Sigmoid colon (tissue), 7 donors: ENCODE measurements at regions of chr3 and their contacts with region 1.

Region 1: GRCh38 chr3:6799264-6799915 is 61.5 kb upstream of the GRM7 start:
- DNase-seq: no peak
- H3K4me3 ChIP-seq: no peak overlapping the region
- H3K27ac ChIP-seq: no peak overlapping the region
- H3K4me1 ChIP-seq: no peaks in the 10 kb centered on the region
- H3K27me3 ChIP-seq: no peaks in the 10 kb centered on the region
- CTCF ChIP-seq: peak in 3 of 4 experiments; percentile 28 to 38 (median 32)
- EP300 ChIP-seq: no peak
- POLR2A ChIP-seq: no peak

Region 2: DNA sequence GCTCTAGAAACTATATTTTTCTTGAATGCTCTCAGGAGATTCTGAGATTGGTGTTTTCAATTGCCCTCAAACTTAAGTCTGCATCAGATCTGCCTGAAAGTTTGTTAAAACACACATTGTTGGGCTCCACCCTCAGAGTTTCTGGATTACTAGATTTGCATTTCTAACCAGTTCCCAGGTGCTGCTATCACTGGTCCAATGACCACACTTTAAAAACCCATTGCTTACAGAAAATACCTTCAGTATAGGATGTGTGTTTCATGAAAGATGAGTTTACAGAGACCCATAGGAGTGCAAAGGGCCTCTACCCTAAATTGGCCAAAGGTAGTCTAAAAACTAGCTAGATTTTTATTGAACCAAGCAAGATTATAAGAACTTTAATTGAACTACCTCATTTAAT is 79.3 kb after region 1 on chr3:
- intact Hi-C with region 1: no loop called
- DNase-seq: no peak
- H3K4me3 ChIP-seq: no peak overlapping the region
- H3K27ac ChIP-seq: no peak overlapping the region
- H3K4me1 ChIP-seq: no peaks in the 10 kb centered on the region
- H3K27me3 ChIP-seq: no peaks in the 10 kb centered on the region
- CTCF ChIP-seq: no peak
- EP300 ChIP-seq: no peak
- POLR2A ChIP-seq: no peak

Region 3: DNA sequence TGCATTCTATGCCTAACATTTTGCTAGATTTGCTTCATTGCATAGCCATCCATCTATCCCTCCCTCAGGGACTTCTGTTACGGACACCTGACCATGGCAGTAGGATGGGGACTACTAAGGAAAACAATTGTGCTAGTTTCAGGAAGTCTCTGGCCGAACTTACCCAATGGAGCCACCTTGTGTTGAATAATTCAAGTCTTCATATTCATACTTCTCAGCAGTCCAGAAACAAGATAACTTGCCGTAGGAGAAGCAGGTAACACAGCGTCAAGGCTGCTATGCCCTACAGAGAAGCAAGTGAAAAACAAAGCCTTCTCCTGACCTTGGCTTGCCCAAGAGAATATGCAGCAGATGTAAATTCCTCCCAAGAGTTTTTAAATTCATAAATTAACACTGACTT is 746.9 kb after region 1 on chr3:
- intact Hi-C with region 1: loop called (anchors 10 kb)
- DNase-seq: no peak
- H3K4me3 ChIP-seq: no peak overlapping the region
- H3K27ac ChIP-seq: no peak overlapping the region
- H3K4me1 ChIP-seq: no peaks in the 10 kb centered on the region
- H3K27me3 ChIP-seq: no peaks in the 10 kb centered on the region
- CTCF ChIP-seq: peak in 1 of 4 experiments; percentile 9
- EP300 ChIP-seq: no peak
- POLR2A ChIP-seq: no peak